ENCODE measurements at regions of chr9 and their contacts with region 1.

Region 1: GRCh38 chr9:111483862-111484571 is at the start of gene ECPAS:
- DNase-seq: peak; percentile 65 to 85
- ATAC-seq: peak; percentile 51 to 63
- H3K4me3 ChIP-seq: peak within 1 kb of the TSS; percentile 81 to 94 (median 88)
- H3K27ac ChIP-seq: peak within 1 kb of the TSS; percentile 95 to 99 (median 98)
- H3K4me1 ChIP-seq: peaks cover 36 to 37% of the 10 kb centered on the region in 2 donors
- H3K27me3 ChIP-seq: no peaks in the 10 kb centered on the region
- CTCF ChIP-seq: peak in 4 of 5 experiments; percentile 9 to 36 (median 15)
- POLR2A ChIP-seq: peak; percentile 71 to 75
- total RNA-seq, gene ECPAS: 320 to 509 (median 424) TPM

Region 2: GRCh38 chr9:110256380-110257096 is 1227.5 kb before region 1 on chr9 and contains the start of gene TXN:
- in situ Hi-C with region 1: no loop called
- intact Hi-C with region 1: loop called (anchors 2 kb)
- DNase-seq: peak; percentile 73 to 83
- ATAC-seq: peak; percentile 82 to 84
- H3K4me3 ChIP-seq: peak within 1 kb of the TSS; percentile 73 to 85 (median 79)
- H3K27ac ChIP-seq: peak within 1 kb of the TSS; percentile 87 to 92 (median 90)
- H3K4me1 ChIP-seq: peaks cover 7 to 15% of the 10 kb centered on the region in 2 donors
- H3K27me3 ChIP-seq: no peaks in the 10 kb centered on the region
- CTCF ChIP-seq: no peak
- POLR2A ChIP-seq: peak; percentile 92
- total RNA-seq, gene TXN: 44.9 to 130 (median 58.5) TPM

Region 3: GRCh38 chr9:110707419-110707818 is 776.6 kb before region 1 on chr9:
- in situ Hi-C with region 1: no loop called
- intact Hi-C with region 1: no loop called
- DNase-seq: no peak
- ATAC-seq: no peak
- H3K4me3 ChIP-seq: no peak overlapping the region
- H3K27ac ChIP-seq: no peak overlapping the region
- H3K4me1 ChIP-seq: no peaks in the 10 kb centered on the region
- H3K27me3 ChIP-seq: no peaks in the 10 kb centered on the region
- CTCF ChIP-seq: no peak
- POLR2A ChIP-seq: no peak

Region 4: DNA sequence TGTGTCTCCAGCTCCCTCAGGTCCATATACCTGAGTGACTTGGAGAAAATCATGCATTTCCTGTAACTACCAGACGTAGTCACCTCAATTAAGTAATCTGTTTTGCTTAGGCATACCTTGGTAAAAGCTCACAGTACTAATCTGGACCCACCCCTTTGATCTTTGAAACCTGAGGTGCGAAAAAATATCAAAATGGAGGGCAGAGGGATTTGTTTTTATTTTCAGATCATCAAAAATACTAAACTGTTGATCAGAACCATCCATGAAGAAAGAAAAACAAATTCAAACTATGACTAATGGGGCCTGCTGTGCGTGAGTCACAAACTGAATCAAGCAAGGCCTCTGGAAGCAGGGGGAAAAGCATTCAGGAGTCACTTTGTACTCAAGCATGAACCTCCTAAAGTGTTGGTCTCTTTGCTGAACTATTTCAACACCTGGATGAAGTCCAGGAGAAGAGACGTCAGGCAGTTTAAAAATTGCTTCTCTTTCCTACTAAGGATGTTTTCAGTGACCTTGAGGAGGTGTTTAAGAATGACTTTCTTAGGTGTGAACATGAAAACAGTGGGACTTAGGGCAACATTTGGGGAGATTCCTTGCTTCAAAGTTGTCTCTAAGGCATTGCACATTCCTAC is 739.1 kb before region 1 on chr9:
- in situ Hi-C with region 1: no loop called
- intact Hi-C with region 1: loop called (anchors 10 kb)
- DNase-seq: peak; percentile 56 to 74
- ATAC-seq: peak; percentile 87 to 88
- H3K4me3 ChIP-seq: no peak overlapping the region
- H3K27ac ChIP-seq: peak overlapping the region; percentile 83 to 88 (median 85)
- H3K4me1 ChIP-seq: peaks cover 16 to 31% of the 10 kb centered on the region in 2 donors
- H3K27me3 ChIP-seq: no peaks in the 10 kb centered on the region
- CTCF ChIP-seq: no peak
- POLR2A ChIP-seq: no peak

Region 5: DNA sequence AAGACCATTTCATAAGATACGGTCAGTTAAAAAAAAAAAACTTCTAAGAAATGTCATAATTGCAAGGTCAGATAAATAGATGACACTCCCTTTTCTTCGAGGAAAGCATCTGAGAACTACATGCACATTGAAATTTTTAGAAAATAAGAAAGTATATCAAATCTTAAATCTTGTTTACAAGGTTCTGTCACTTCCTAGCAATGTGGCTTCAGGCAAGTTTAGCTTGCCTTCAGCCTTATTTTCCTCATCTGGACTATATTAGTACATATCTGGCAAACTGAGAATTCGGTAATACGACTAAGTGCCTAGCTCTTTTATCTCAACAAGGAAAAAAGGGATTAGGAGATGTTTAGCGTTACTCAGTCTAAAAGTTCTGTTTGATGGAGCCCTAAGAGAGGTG is 121.5 kb before region 1 on chr9:
- in situ Hi-C with region 1: no loop called
- intact Hi-C with region 1: no loop called
- DNase-seq: no peak
- ATAC-seq: no peak
- H3K4me3 ChIP-seq: no peak overlapping the region
- H3K27ac ChIP-seq: no peak overlapping the region
- H3K4me1 ChIP-seq: no peaks in the 10 kb centered on the region
- H3K27me3 ChIP-seq: no peaks in the 10 kb centered on the region
- CTCF ChIP-seq: no peak
- POLR2A ChIP-seq: no peak

Region 6: DNA sequence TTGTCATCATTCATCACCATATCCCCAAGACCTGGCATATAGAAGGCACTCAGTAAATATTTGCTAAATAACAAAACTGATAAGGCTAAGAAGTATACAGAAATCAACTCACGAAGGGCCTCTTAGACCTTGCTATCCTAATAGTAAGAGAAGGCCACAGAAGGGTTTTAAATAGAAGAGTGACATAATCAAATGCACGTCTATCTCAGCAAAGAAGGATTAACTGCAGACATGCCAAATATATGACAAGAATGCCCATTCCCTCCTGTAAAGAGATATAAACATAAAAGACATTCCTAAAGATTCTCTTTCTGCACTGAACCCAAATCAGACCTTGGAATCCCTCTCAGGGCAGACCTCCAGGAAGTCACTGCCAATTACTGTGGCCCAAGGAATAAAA is 33.9 kb before region 1 on chr9:
- in situ Hi-C with region 1: no loop called
- intact Hi-C with region 1: no loop called
- DNase-seq: no peak
- ATAC-seq: peak; percentile 75 to 77
- H3K4me3 ChIP-seq: peak overlapping the region in 2 of 4 donors; percentile 16 to 21
- H3K27ac ChIP-seq: peak overlapping the region; percentile 65 to 87 (median 80)
- H3K4me1 ChIP-seq: peaks cover 55 to 62% of the 10 kb centered on the region in 2 donors
- H3K27me3 ChIP-seq: no peaks in the 10 kb centered on the region
- CTCF ChIP-seq: no peak
- POLR2A ChIP-seq: no peak

Region 7: GRCh38 chr9:111525056-111525977 is 41.3 kb after region 1 on chr9 and contains the start of gene ZNF483:
- in situ Hi-C with region 1: no loop called
- intact Hi-C with region 1: loop called (anchors 1 kb)
- DNase-seq: peak in 1 of 2 donors; percentile 39
- ATAC-seq: peak; percentile 50 to 55
- H3K4me3 ChIP-seq: peak within 1 kb of the TSS; percentile 73 to 84 (median 75)
- H3K27ac ChIP-seq: peak within 1 kb of the TSS in 1 of 4 donors; percentile 19
- H3K4me1 ChIP-seq: peaks cover 0 to 3% of the 10 kb centered on the region in 2 donors
- H3K27me3 ChIP-seq: peaks cover 0 to 6% (median 5%) of the 10 kb centered on the region in 3 donors
- CTCF ChIP-seq: no peak
- POLR2A ChIP-seq: no peak
- total RNA-seq, gene ZNF483: 0.12 to 0.82 (median 0.21) TPM

Region 8: DNA sequence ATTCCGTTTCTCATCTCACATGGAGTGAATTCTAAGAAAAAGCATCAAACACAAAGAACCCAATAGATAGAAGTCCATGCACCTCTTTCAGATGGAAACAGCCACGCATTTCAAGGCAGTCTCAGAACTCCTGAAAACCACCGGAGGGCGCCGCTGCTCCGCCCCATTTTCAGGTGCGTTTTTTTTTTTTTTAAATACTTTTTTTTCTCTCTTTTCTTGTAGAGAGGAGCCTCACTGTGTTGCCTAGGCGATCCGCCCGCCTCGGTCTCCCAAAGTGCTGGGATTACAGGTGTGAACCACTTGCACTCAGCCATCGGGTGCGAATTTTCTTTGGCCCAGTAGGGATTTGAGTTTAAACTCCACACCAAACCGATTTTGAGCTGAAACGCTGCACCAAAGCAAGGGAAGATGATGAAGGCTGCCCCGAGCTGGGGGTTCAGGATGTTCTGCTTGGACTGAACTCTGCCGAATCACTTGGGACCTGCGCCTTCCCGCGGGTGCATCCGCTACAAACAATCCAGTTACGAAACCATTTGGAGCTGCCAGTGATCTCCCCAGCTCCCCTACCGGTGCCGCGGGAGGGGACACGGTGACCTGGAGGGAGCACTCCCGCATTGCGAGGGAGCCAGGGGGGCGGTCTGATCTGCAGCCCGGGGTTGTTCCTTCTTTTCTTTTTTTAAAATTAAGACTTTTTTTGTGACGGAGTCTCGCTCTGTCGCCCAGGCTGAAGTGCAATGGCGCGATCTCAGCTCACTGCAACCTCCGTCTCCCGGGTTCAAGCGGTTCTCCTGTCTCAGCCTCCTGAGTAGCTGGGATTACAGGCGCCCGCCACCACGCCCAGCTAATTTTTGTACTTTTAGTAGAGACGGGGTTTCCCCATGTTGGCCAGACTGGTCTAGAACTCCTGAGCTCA is 114.1 kb after region 1 on chr9:
- in situ Hi-C with region 1: no loop called
- intact Hi-C with region 1: loop called (anchors 2 kb)
- DNase-seq: peak; percentile 35 to 54
- ATAC-seq: peak; percentile 61 to 62
- H3K4me3 ChIP-seq: peak overlapping the region; percentile 66 to 89 (median 80)
- H3K27ac ChIP-seq: peak overlapping the region; percentile 69 to 81 (median 78)
- H3K4me1 ChIP-seq: peaks cover 0 to 9% of the 10 kb centered on the region in 2 donors
- H3K27me3 ChIP-seq: no peaks in the 10 kb centered on the region
- CTCF ChIP-seq: peak; percentile 10 to 63 (median 40)
- POLR2A ChIP-seq: no peak